Sciatic nerve (tissue), 2 donors: ENCODE measurements at regions of chr12 and their contacts with region 1.

Region 1: GRCh38 chr12:80381121-80381520 is 62.9 kb upstream of the PTPRQ start:
- DNase-seq: no peak
- ATAC-seq: no peak

Region 2: GRCh38 chr12:79415746-79416435 is 965.2 kb before region 1 on chr12:
- intact Hi-C with region 1: loop called (anchors 5 kb)
- DNase-seq: no peak
- ATAC-seq: no peak

Region 3: DNA sequence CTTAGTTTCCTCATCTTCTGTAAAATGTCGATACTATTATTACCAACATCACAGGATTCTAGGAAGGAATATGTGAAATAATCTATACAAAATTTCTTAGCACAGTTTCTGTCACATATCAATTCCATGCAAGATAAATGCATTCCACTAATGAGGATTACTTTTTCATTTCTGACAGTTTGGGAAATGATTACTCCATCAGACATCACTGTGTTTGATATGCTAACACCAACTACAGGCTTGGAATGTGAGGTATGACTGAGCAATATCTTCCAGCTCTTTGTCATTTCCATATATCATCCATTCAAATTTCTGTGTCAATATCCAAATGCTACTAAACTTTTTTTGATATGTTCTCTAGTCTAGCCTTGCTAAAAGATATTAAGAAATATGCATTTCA is 48.3 kb before region 1 on chr12:
- intact Hi-C with region 1: no loop called
- DNase-seq: no peak
- ATAC-seq: no peak